ENCODE measurements at regions of chr11 and their contacts with region 1.

Region 1: DNA sequence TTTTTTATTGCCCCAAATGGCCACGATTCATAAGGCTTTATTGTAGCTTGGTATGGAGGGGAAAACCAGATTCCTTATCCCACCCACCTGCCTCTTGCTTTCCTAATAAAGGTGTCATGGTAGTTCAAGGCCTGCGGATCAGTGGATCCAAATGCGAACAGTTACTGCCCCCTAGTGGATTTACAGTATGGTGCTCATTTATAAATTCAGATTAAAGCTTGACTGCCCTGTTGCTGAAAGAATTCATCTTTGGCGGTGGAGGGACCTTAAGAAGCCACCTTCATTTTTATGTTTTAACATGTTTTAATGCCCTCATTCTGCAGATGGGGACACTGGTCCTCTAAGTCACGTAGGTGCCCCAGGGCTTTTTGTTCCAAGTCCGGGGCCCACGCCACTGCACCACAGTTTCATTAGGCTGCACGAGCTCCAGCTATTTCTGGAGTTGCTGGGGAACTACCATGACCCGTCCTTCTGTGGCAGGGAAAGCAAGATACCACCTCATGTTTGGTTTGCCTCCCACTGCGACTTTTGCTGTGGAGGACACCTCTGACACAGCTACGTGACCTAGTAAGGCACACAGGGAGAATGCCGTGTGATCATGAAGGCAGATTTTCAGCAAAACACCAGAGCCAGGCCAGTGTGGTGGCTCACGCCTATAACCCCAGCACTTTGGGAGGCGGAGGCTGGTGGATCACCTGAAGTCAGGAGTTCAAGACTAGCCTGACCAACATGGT is 15.6 kb upstream of the INCENP start:
- DNase-seq: peak; percentile 72 to 86 (median 78)
- H3K4me3 ChIP-seq: no peak overlapping the region
- H3K27ac ChIP-seq: no peak overlapping the region
- H3K4me1 ChIP-seq: peaks cover 0 to 21% (median 12%) of the 10 kb centered on the region in 4 experiments
- H3K27me3 ChIP-seq: peaks cover 0 to 4% (median 0%) of the 10 kb centered on the region in 5 experiments

Region 2: GRCh38 chr11:61871158-61871597 is 237.0 kb before region 1 on chr11:
- CTCF ChIA-PET with region 1: interaction called, 14 read pairs
- POLR2A ChIA-PET with region 1: no interaction called
- DNase-seq: peak; percentile 65 to 76 (median 76)
- H3K4me3 ChIP-seq: peak overlapping the region in 4 of 7 experiments; percentile 26 to 72 (median 47)
- H3K27ac ChIP-seq: no peak overlapping the region
- H3K4me1 ChIP-seq: peaks cover 0 to 14% (median 6%) of the 10 kb centered on the region in 4 experiments
- H3K27me3 ChIP-seq: peaks cover 0 to 2% (median 0%) of the 10 kb centered on the region in 5 experiments

Region 3: GRCh38 chr11:61892085-61892370 is 216.2 kb before region 1 on chr11:
- CTCF ChIA-PET with region 1: interaction called, 201 read pairs
- POLR2A ChIA-PET with region 1: no interaction called
- DNase-seq: no peak
- H3K4me3 ChIP-seq: peak overlapping the region; percentile 10 to 86 (median 69)
- H3K27ac ChIP-seq: no peak overlapping the region
- H3K4me1 ChIP-seq: peaks cover 0 to 24% (median 19%) of the 10 kb centered on the region in 4 experiments
- H3K27me3 ChIP-seq: peaks cover 0 to 2% (median 0%) of the 10 kb centered on the region in 5 experiments

Region 4: DNA sequence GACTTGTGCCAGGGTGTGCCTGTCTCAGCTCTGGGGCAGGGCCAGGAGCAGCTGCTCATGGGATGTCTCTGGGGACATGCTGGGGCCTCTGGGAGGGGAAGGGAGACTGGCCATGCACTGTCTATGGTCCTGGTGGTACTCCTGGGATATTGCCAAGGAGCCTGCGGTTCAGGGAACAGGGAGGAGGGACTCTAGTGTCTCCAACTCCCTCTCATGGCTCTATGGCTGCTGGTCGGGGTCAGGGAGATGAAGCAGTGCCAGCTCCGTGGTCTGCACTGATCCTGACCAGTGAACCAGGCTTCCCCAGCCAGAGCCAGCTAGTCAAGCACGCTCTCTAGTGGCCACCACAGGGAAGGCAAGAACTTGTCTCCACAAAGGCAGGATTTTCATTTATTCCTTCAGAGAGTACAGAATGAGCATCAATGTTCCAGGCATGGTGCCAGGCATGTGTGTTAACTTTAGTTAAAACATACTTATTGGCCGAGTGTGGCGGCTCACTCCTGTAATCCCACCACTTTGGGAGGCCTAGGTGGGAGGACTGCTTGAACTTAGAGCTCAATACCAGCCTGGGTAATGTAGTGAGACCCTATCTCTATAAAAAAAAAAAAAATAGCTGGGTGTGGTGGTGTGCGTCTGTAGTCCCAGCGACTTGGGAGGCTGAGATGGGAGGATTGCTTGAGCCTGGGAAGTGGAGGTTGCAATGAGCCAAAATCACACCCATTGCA is 160.5 kb before region 1 on chr11:
- CTCF ChIA-PET with region 1: interaction called, 49 read pairs
- POLR2A ChIA-PET with region 1: no interaction called
- DNase-seq: peak; percentile 77 to 85 (median 78)
- H3K4me3 ChIP-seq: no peak overlapping the region
- H3K27ac ChIP-seq: no peak overlapping the region
- H3K4me1 ChIP-seq: peaks cover 0 to 5% (median 1%) of the 10 kb centered on the region in 4 experiments
- H3K27me3 ChIP-seq: no peaks in the 10 kb centered on the region

Region 5: GRCh38 chr11:62337303-62338181 is 229.4 kb after region 1 on chr11 and contains the start of gene ASRGL1:
- CTCF ChIA-PET with region 1: no interaction called
- POLR2A ChIA-PET with region 1: no interaction called
- DNase-seq: peak; percentile 59 to 72 (median 71)
- H3K4me3 ChIP-seq: peak within 1 kb of the TSS; percentile 61 to 85 (median 77)
- H3K27ac ChIP-seq: no peak within 1 kb of the TSS
- H3K4me1 ChIP-seq: peaks cover 3 to 17% (median 13%) of the 10 kb centered on the region in 4 experiments
- H3K27me3 ChIP-seq: peaks cover 0 to 5% (median 0%) of the 10 kb centered on the region in 5 experiments

Region 6: GRCh38 chr11:62370743-62371440 is 262.7 kb after region 1 on chr11:
- CTCF ChIA-PET with region 1: no interaction called
- POLR2A ChIA-PET with region 1: no interaction called
- DNase-seq: peak; percentile 14 to 61 (median 56)
- H3K4me3 ChIP-seq: peak overlapping the region in 4 of 7 experiments; percentile 27 to 60 (median 44)
- H3K27ac ChIP-seq: no peak overlapping the region
- H3K4me1 ChIP-seq: peaks cover 0 to 4% (median 0%) of the 10 kb centered on the region in 4 experiments
- H3K27me3 ChIP-seq: no peaks in the 10 kb centered on the region